ENCODE measurements at regions of chr1 and their contacts with region 1.

Region 1: DNA sequence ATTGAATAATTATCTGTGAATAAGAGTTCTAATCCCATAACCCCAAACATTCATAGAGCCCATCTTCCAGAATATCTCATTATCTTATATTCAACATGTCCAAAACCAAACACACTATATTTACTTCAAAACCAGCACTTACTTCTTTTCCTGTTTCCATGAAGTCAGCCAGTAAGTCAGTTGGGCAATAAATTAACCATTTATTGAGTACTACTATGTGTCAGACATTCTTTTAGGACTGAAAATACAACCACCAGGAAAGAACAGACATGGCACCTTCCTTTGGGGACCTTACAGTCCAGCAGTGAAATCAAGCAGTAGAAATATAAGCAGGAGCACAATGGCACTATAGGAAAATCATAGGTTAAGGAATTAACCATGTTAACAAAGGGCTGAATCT is 8.8 kb downstream of the AK5 start:
- DNase-seq: no peak
- H3K4me3 ChIP-seq: no peak overlapping the region
- H3K27ac ChIP-seq: no peak overlapping the region
- H3K4me1 ChIP-seq: no peaks in the 10 kb centered on the region
- H3K27me3 ChIP-seq: no peaks in the 10 kb centered on the region
- CTCF ChIP-seq: no peak
- POLR2A ChIP-seq: no peak

Region 2: DNA sequence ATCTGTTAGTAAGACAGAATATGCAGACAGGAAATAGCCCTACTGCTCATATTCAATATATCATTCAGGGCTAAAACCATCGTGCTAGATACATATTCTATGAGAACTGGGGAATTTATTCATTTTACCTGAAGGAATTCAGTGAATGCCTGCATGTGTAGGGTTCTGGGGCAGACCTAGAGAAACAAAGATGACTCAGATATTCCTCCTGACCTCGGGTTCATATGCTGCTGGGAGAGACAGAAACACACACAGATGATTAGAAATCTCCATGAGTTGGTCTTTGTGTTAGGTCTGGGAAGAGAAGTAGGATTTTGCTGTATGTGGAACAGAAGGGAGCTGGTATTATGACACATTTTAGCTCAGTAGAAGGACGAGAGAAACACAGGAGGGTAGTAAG is 599.8 kb before region 1 on chr1:
- intact Hi-C with region 1: loop called (anchors 5 kb)
- DNase-seq: no peak
- H3K4me3 ChIP-seq: no peak overlapping the region
- H3K27ac ChIP-seq: no peak overlapping the region
- H3K4me1 ChIP-seq: no peaks in the 10 kb centered on the region
- H3K27me3 ChIP-seq: no peaks in the 10 kb centered on the region
- CTCF ChIP-seq: no peak
- POLR2A ChIP-seq: no peak

Region 3: DNA sequence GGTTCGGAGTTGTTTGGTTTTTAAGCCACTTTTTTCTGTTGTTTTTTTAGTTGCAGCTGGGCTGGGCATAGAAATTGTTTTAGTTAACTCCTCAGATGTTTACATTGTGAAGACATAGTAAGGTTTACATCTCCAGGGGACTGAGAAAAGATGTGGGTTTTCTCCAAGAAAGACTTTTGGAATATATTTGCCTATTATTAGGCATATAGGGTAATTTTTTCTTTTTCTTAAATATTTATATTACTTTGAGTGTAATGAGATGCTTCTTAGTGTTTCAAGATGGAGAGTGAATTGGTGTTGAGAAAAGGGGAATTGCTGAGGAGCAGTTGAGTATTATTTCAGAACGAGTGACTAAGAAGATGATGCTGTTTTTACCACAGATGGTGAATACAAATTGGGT is 44.7 kb before region 1 on chr1:
- intact Hi-C with region 1: no loop called
- DNase-seq: no peak
- H3K4me3 ChIP-seq: no peak overlapping the region
- H3K27ac ChIP-seq: no peak overlapping the region
- H3K4me1 ChIP-seq: no peaks in the 10 kb centered on the region
- H3K27me3 ChIP-seq: no peaks in the 10 kb centered on the region
- CTCF ChIP-seq: no peak
- POLR2A ChIP-seq: no peak

Region 4: GRCh38 chr1:77308889-77309621 is 18.5 kb after region 1 on chr1:
- intact Hi-C with region 1: no loop called
- DNase-seq: no peak
- H3K4me3 ChIP-seq: no peak overlapping the region
- H3K27ac ChIP-seq: no peak overlapping the region
- H3K4me1 ChIP-seq: no peaks in the 10 kb centered on the region
- H3K27me3 ChIP-seq: no peaks in the 10 kb centered on the region
- CTCF ChIP-seq: no peak
- POLR2A ChIP-seq: no peak

Region 5: DNA sequence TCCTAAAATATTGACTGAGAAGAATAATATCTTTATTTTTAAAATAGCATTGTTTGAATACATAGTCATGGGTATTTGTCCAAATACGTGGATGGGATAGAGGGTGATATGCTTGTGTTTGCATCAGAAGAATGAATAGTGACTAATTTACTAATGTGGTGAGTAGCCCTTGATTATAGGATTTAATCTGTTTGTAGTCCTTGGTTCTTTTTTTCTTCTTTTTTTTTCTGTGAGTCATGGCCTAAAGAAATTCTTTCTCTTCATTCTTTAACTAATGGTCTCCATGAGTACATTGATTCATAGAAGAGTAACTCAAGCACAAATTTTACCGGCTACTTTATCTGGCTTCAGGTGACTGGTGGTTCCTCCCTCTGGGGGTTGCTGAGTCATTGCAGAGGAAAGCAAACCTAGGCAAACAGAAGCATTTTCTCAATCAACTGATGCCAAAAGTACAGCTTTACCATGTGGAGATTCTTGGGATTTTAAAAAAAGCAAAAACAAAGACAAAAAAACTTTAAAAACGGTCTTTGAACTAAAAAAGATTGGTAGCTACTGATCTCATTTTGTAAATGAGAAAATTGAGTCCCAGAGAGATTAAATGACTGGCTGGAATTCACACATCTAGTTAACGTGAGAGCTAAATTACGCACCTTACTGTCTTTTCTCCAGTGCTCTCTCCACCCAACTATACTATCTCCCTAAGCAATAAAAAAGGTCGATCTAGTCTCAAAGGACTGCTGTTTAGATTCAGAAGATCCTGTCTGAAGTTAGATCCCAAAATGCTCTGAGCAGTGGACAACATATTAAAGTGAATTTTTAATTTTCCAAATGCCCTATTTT is 31.7 kb after region 1 on chr1:
- intact Hi-C with region 1: no loop called
- DNase-seq: no peak
- H3K4me3 ChIP-seq: no peak overlapping the region
- H3K27ac ChIP-seq: no peak overlapping the region
- H3K4me1 ChIP-seq: no peaks in the 10 kb centered on the region
- H3K27me3 ChIP-seq: no peaks in the 10 kb centered on the region
- CTCF ChIP-seq: no peak
- POLR2A ChIP-seq: no peak